Activated naive CD4-positive, alpha-beta T cell treated with anti-CD3 and anti-CD28 coated beads, Interleukin-2, amount 10 ng/mL, durations not matched to agents 7 days and 5 days (primary cell): ENCODE measurements at regions of chr17 and their contacts with region 1.

Region 1: GRCh38 chr17:81094509-81095382 is 59.8 kb downstream of the BAIAP2 start:
- DNase-seq: peak; percentile 91
- H3K4me3 Mint-ChIP-seq: no peak overlapping the region
- H3K27ac Mint-ChIP-seq: peak overlapping the region; percentile 24
- H3K4me1 Mint-ChIP-seq: peaks cover 34% of the 10 kb centered on the region
- H3K27me3 Mint-ChIP-seq: peaks cover 80% of the 10 kb centered on the region

Region 2: GRCh38 chr17:81018044-81018802 is 76.5 kb before region 1 on chr17:
- CTCF ChIA-PET with region 1: interaction called, 12 read pairs
- DNase-seq: peak; percentile 73
- H3K4me3 Mint-ChIP-seq: peak overlapping the region; percentile 74
- H3K27ac Mint-ChIP-seq: peak overlapping the region; percentile 96
- H3K4me1 Mint-ChIP-seq: peaks cover 48% of the 10 kb centered on the region
- H3K27me3 Mint-ChIP-seq: peaks cover 4% of the 10 kb centered on the region

Region 3: GRCh38 chr17:81025065-81025740 is 69.5 kb before region 1 on chr17:
- CTCF ChIA-PET with region 1: interaction called, 12 read pairs
- DNase-seq: no peak
- H3K4me3 Mint-ChIP-seq: no peak overlapping the region
- H3K27ac Mint-ChIP-seq: no peak overlapping the region
- H3K4me1 Mint-ChIP-seq: peaks cover 17% of the 10 kb centered on the region
- H3K27me3 Mint-ChIP-seq: peaks cover 63% of the 10 kb centered on the region

Region 4: DNA sequence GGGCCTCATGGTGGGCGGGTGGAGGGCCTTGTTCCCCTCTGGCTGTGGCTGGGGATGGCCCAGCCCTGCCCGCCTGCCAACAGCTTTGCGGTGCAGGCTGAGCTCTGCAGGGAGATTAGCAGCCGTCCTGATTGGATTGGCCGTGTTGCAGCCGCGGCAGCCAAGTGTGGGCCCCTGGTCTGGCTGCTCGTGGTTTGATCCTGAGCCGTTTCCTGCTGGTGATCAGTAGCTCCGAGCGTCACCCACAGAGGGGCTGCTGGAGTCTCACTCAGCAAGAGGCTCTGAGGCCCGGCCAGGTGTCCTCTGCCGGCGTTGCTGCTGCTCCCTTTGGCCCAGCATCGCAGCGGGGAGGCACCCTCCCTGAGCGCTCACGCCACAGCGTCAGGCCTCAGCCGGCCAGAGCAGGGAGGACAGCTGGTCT is 27.3 kb before region 1 on chr17:
- CTCF ChIA-PET with region 1: no interaction called
- DNase-seq: no peak
- H3K4me3 Mint-ChIP-seq: no peak overlapping the region
- H3K27ac Mint-ChIP-seq: no peak overlapping the region
- H3K4me1 Mint-ChIP-seq: no peaks in the 10 kb centered on the region
- H3K27me3 Mint-ChIP-seq: peaks cover 5% of the 10 kb centered on the region

Region 5: DNA sequence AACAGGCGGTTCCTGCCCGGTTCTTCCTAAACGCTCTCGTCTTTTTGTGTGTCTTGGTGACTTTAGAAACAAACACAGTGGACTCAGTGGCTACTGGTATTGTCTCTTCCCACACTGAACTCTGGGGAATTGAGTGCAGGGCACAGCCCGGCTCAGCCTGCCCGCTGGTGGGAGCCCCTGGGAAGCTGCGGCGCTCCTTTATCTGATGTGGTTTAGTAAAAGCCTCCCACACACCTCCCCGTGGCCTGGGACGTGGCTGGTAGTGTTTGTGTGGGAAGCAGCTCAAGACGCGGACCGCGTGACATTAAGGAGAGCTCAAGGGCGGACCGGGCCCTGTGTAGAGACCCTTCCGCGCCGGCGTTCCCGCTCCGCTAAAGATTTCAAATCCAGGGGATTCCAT is 15.2 kb after region 1 on chr17:
- CTCF ChIA-PET with region 1: no interaction called
- DNase-seq: no peak
- H3K4me3 Mint-ChIP-seq: no peak overlapping the region
- H3K27ac Mint-ChIP-seq: no peak overlapping the region
- H3K4me1 Mint-ChIP-seq: no peaks in the 10 kb centered on the region
- H3K27me3 Mint-ChIP-seq: no peaks in the 10 kb centered on the region

Region 6: DNA sequence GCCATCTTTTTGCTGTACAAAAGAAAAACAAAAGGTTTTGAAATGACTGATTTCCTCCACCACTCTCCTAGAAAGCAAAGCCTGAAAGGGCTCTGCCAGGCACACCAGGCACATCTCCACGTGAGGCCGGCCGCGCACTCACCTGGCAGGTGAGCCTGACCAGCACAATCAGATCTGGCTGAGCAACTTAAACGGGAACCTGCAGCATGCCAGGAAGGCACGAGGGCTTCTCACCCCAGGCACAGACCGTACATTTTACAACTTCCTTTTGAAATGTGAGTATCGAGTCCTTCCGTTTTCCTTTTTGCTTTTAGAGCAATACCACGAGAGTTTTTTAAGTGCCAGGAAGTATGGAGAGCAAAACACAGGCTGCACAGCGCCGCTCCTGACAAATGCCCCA is 177.9 kb after region 1 on chr17:
- CTCF ChIA-PET with region 1: no interaction called
- DNase-seq: no peak
- H3K4me3 Mint-ChIP-seq: no peak overlapping the region
- H3K27ac Mint-ChIP-seq: peak overlapping the region; percentile 57
- H3K4me1 Mint-ChIP-seq: peaks cover 6% of the 10 kb centered on the region
- H3K27me3 Mint-ChIP-seq: no peaks in the 10 kb centered on the region